MCF 10A (cell line): ENCODE measurements at regions of chr11 and their contacts with region 1.

Region 1: GRCh38 chr11:65261591-65262380 is at the start of gene POLA2:
- DNase-seq: peak; percentile 96
- H3K4me3 Mint-ChIP-seq: peak within 1 kb of the TSS; percentile 81
- H3K27ac Mint-ChIP-seq: peak within 1 kb of the TSS; percentile 95
- H3K4me1 Mint-ChIP-seq: peaks cover 9% of the 10 kb centered on the region
- H3K27me3 Mint-ChIP-seq: no peaks in the 10 kb centered on the region
- CTCF ChIP-seq: no peak
- total RNA-seq, gene POLA2: 8.8 and 10.3 TPM in 2 replicates

Region 2: DNA sequence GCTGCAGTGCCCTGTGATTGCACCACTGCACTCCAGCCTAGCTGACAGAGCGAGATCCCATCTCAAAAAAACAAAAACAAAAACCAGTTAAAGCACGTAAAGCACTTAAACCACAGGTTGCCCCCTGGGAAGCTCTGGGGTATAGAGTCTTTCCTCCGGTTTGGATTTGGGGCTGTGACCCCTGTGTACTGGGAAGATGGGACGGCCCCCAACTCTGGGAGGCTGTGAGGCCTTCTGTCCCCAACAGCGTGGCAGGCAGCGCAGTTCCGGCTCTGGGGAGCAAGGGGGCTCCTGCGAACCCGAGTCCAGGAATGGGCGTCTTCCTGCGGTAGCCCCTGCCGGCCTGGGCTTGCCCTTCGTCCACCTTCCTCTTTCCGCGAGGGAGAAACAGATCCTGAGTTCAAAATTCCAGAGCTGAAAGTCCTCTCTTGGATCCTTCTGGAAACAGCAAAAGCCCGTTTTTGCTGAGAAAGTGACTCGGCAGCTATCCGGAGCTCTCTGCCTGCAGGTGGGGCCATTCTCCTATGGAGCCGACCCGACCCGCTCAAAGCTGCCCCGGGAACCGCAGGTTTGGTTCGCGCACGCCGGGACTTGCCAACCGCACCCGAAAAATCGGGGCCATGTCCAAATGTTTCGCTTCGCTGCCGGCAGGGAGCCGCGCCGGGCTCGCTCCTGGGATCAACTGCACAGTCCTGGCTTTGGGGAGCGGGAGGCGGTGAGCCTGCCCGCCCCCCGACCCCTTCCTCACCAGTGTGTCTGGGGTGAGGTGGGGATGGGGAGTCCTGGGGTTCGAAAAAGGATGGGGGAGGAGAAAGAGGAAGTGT is 36.3 kb before region 1 on chr11:
- CTCF ChIA-PET with region 1: interaction called, 14 read pairs
- POLR2A ChIA-PET with region 1: interaction called, 9 read pairs
- intact Hi-C with region 1: no loop called
- DNase-seq: peak; percentile 72
- H3K4me3 Mint-ChIP-seq: peak overlapping the region; percentile 71
- H3K27ac Mint-ChIP-seq: peak overlapping the region; percentile 35
- H3K4me1 Mint-ChIP-seq: peaks cover 5% of the 10 kb centered on the region
- H3K27me3 Mint-ChIP-seq: no peaks in the 10 kb centered on the region
- CTCF ChIP-seq: peak; percentile 36

Region 3: DNA sequence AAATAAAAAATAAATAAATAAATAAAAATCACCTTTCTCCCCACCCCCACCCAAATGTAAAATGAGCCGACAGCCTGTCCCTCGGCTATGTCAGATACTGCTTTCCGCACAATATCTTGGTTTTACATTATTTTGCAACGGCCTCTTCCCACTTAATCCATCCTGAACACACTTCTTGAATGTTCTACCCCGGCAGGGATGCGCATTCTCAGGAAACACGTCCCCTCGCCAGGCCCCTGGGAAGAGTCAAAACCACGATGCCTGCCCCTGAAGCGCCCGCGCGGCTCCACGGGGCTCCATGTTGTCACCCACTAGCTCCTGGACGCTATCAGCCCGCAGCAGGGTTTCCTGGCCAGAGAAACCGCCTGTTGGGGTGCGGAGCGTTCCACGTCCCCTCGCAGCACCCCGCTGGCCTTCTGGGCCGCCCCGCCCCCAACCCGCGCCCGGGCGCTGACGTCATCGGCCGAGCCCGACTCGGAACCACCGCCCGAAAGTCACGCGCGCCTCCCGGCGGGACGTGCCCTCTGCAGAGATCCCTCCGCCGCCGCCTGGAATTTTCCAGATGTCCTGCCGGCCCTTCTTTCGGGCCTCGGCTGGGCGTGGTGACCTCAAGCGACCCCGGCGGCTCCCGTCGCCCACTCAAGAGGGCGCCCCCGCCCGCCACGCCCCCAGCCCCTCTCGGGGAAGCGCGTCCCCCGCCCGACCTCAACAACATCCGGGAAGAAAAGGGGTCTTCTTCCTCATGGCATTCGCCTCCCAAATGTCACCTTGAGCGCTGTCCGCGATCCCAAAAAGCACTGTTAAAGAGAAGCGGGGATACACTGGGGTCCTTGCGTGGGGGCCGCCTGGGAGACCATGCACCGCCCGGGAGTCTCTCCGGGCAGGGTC is 160.3 kb after region 1 on chr11:
- CTCF ChIA-PET with region 1: no interaction called
- POLR2A ChIA-PET with region 1: no interaction called
- intact Hi-C with region 1: no loop called
- DNase-seq: peak; percentile 93
- H3K4me3 Mint-ChIP-seq: peak overlapping the region; percentile 98
- H3K27ac Mint-ChIP-seq: peak overlapping the region; percentile 99
- H3K4me1 Mint-ChIP-seq: peaks cover 29% of the 10 kb centered on the region
- H3K27me3 Mint-ChIP-seq: peaks cover 10% of the 10 kb centered on the region
- CTCF ChIP-seq: no peak

Region 4: GRCh38 chr11:65574109-65574810 is 312.5 kb after region 1 on chr11:
- CTCF ChIA-PET with region 1: no interaction called
- POLR2A ChIA-PET with region 1: no interaction called
- intact Hi-C with region 1: no loop called
- DNase-seq: peak; percentile 91
- H3K4me3 Mint-ChIP-seq: peak overlapping the region; percentile 97
- H3K27ac Mint-ChIP-seq: no peak overlapping the region
- H3K4me1 Mint-ChIP-seq: peaks cover 40% of the 10 kb centered on the region
- H3K27me3 Mint-ChIP-seq: no peaks in the 10 kb centered on the region
- CTCF ChIP-seq: peak; percentile 98

Region 5: GRCh38 chr11:65927904-65928397 is 666.2 kb after region 1 on chr11:
- CTCF ChIA-PET with region 1: no interaction called
- POLR2A ChIA-PET with region 1: no interaction called
- intact Hi-C with region 1: no loop called
- DNase-seq: no peak
- H3K4me3 Mint-ChIP-seq: no peak overlapping the region
- H3K27ac Mint-ChIP-seq: peak overlapping the region; percentile 35
- H3K4me1 Mint-ChIP-seq: no peaks in the 10 kb centered on the region
- H3K27me3 Mint-ChIP-seq: no peaks in the 10 kb centered on the region
- CTCF ChIP-seq: no peak